Head of caudate nucleus (tissue), 42 donors: ENCODE measurements at regions of chr11 and their contacts with region 1.

Region 1: GRCh38 chr11:132028380-132029240 is 658.2 kb downstream of the NTM start:
- DNase-seq: peak in 24 of 42 donors; percentile 30 to 86 (median 66)

Region 2: GRCh38 chr11:131870305-131870704 is 158.3 kb before region 1 on chr11:
- intact Hi-C with region 1: loop called (anchors 2 kb)
- DNase-seq: no peak

Region 3: GRCh38 chr11:132064987-132065620 is 36.5 kb after region 1 on chr11:
- intact Hi-C with region 1: no loop called
- DNase-seq: peak in 14 of 42 donors; percentile 2 to 74 (median 42)